CD4-positive, alpha-beta T cell (primary cell): ENCODE measurements at regions of chr6 and their contacts with region 1.

Region 1: DNA sequence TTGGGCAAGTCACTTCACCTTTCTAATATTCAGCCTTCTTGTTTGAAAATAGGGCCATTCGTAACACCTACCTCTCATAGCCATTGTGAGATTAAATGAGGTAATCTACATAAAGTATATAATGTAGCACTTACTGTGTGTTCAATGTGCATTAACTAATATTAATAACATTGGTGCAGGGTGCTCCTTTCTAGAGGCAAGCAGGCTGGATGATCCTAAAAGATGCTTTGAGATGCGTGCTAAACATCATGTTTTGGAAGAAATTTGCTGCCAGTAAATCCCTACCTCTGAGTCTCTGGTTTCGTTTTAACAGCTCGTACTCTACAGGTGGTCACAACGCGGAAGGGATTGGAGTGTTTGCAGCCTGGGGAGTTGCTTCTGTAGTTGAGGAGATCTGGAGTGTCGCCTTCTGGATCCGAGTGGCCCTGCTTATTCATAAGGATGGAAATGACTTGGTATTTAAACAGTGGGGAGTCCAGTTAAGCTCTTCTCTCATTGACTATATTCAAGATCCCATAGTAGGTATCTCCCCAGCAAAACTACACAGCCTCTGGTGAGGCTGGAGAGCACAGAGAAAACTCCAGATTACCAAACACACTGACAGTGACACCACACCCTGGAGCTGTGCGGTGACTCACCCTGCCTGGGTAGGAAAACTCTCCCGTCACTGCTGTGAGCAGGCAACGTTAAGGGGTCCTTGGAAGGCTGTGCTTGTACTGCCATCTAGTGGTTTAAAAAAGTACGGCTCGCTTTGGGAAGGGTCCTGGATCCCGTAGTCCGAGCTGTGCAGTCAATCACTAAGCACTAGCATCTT is 107.9 kb downstream of the MAP3K7 start:
- DNase-seq: peak; percentile 64 to 92 (median 78)
- ATAC-seq: peak; percentile 99
- H3K4me3 ChIP-seq: no peak overlapping the region
- H3K4me3 Mint-ChIP-seq: peak overlapping the region; percentile 58
- H3K27ac ChIP-seq: no peak overlapping the region
- H3K27ac Mint-ChIP-seq: peak overlapping the region; percentile 66
- H3K4me1 ChIP-seq: peaks cover 18% of the 10 kb centered on the region
- H3K4me1 Mint-ChIP-seq: peaks cover 34% of the 10 kb centered on the region
- H3K27me3 ChIP-seq: no peaks in the 10 kb centered on the region
- H3K27me3 Mint-ChIP-seq: no peaks in the 10 kb centered on the region
- CTCF ChIP-seq: peak; percentile 89

Region 2: DNA sequence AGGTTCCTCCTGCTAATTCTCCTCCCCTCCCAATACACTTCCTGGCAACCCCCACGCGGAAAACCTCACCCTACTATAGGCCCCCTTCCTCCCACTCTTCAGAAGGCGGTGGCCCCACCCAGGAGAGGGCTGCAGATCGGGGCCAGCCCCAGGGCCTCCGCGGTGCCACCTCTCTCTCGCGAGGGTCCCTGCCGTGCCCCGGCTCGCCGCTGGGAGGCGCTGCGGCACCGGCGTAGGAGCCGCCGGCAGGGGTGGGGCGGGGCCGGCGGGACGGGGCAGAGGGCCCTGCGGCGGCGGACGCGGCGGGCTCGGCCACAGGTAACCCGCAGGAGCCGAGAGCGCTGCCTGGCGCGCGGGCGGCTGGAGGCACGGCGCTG is 1046.1 kb before region 1 on chr6 and contains the start of gene ANKRD6:
- CTCF ChIA-PET with region 1: no interaction called
- POLR2A ChIA-PET with region 1: no interaction called
- intact Hi-C with region 1: loop called in 1 of 2 experiments (anchors 5 kb)
- DNase-seq: peak; percentile 57 to 90 (median 78)
- ATAC-seq: peak; percentile 94
- H3K4me3 ChIP-seq: peak within 1 kb of the TSS; percentile 73
- H3K4me3 Mint-ChIP-seq: peak within 1 kb of the TSS; percentile 98
- H3K27ac ChIP-seq: peak within 1 kb of the TSS in 1 of 2 donors; percentile 37
- H3K27ac Mint-ChIP-seq: peak within 1 kb of the TSS; percentile 73
- H3K4me1 ChIP-seq: peaks cover 15% of the 10 kb centered on the region
- H3K4me1 Mint-ChIP-seq: peaks cover 35% of the 10 kb centered on the region
- H3K27me3 ChIP-seq: no peaks in the 10 kb centered on the region
- H3K27me3 Mint-ChIP-seq: no peaks in the 10 kb centered on the region
- CTCF ChIP-seq: peak; percentile 69
- total RNA-seq, gene ANKRD6: 3.8 to 4.8 TPM

Region 3: GRCh38 chr6:89940225-89941027 is 538.6 kb before region 1 on chr6:
- CTCF ChIA-PET with region 1: interaction called, 37 read pairs
- POLR2A ChIA-PET with region 1: interaction called, 20 read pairs
- intact Hi-C with region 1: loop called (anchors 1 kb)
- DNase-seq: peak; percentile 47 to 87 (median 65)
- ATAC-seq: peak; percentile 95
- H3K4me3 ChIP-seq: no peak overlapping the region
- H3K4me3 Mint-ChIP-seq: no peak overlapping the region
- H3K27ac ChIP-seq: no peak overlapping the region
- H3K27ac Mint-ChIP-seq: peak overlapping the region; percentile 67
- H3K4me1 ChIP-seq: peaks cover 8% of the 10 kb centered on the region
- H3K4me1 Mint-ChIP-seq: peaks cover 41% of the 10 kb centered on the region
- H3K27me3 ChIP-seq: no peaks in the 10 kb centered on the region
- H3K27me3 Mint-ChIP-seq: no peaks in the 10 kb centered on the region
- CTCF ChIP-seq: peak; percentile 89

Region 4: DNA sequence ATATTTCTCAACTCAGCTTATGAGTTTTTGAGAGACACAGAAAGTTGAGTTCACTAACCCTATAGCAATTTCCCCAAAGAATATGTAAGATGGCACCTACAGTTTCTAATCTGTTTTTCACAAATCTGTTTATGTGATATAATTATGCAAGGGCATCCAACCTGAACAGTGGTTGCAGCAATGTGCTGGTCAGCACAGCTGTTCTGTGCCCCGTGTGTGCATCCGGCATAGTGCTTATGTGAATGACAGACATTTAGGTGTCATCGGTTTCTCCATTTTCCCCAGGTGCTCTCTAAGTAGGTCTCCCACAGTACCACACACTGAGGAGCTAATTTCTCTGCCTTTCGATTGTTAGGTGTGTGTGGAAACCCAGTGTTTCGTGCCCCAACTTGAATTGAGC is 174.7 kb before region 1 on chr6:
- CTCF ChIA-PET with region 1: no interaction called
- POLR2A ChIA-PET with region 1: interaction called, 3 read pairs
- intact Hi-C with region 1: loop called in 1 of 2 experiments (anchors 5 kb)
- DNase-seq: no peak
- ATAC-seq: no peak
- H3K4me3 ChIP-seq: no peak overlapping the region
- H3K4me3 Mint-ChIP-seq: no peak overlapping the region
- H3K27ac ChIP-seq: no peak overlapping the region
- H3K27ac Mint-ChIP-seq: no peak overlapping the region
- H3K4me1 ChIP-seq: no peaks in the 10 kb centered on the region
- H3K4me1 Mint-ChIP-seq: peaks cover 22% of the 10 kb centered on the region
- H3K27me3 ChIP-seq: peaks cover 0 to under 1% of the 10 kb centered on the region in 2 experiments
- H3K27me3 Mint-ChIP-seq: no peaks in the 10 kb centered on the region
- CTCF ChIP-seq: no peak

Region 5: GRCh38 chr6:90413867-90414266 is 65.1 kb before region 1 on chr6:
- CTCF ChIA-PET with region 1: interaction called, 3 read pairs
- POLR2A ChIA-PET with region 1: interaction called, 3 read pairs
- intact Hi-C with region 1: loop called in 1 of 2 experiments (anchors 5 kb)
- DNase-seq: peak; percentile 56 to 93 (median 66)
- ATAC-seq: peak; percentile 79
- H3K4me3 ChIP-seq: peak overlapping the region; percentile 35
- H3K4me3 Mint-ChIP-seq: peak overlapping the region; percentile 85
- H3K27ac ChIP-seq: no peak overlapping the region
- H3K27ac Mint-ChIP-seq: peak overlapping the region; percentile 90
- H3K4me1 ChIP-seq: peaks cover 42% of the 10 kb centered on the region
- H3K4me1 Mint-ChIP-seq: peaks cover 37% of the 10 kb centered on the region
- H3K27me3 ChIP-seq: no peaks in the 10 kb centered on the region
- H3K27me3 Mint-ChIP-seq: peaks cover 5% of the 10 kb centered on the region
- CTCF ChIP-seq: no peak